Activated CD8-positive, alpha-beta T cell treated with anti-CD3 and anti-CD28 coated beads, Interleukin-2, amount 10 ng/mL, durations not matched to agents 7 days and 5 days (primary cell): ENCODE measurements at regions of chr3 and their contacts with region 1.

Region 1: DNA sequence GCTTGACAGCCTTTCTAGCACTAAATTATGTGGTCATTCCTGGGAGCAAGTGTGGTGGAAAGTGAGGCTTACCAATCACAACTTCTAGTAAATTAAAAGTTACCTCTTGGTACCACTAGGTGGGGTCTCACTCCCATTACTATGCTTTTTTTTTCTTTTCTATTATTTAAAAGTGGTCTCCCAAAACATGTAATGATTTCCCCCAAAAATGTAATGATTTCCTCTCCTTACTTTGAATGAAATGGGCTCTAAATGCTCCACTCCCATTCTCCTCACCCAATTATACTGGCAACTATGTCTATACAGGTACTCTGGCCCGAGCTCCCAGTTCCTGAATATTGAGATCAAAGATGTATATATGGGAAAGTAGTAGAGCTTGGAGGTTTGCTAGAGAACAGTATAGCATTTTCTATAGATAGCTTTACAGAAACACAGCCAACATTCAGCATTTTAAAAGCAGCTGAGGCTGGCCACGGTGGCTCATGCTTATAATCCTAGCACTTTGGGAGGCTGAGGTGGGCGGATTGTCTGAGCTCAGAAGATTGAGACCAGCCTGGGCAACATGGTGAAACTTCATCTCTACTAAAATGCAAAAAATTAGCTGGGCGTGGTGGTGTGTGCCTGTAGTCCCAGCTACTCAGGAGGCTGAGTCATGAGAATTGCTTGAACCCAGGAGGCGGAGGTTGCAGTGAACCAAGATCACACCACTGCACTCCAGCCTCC is 70.9 kb downstream of the DCUN1D1 start:
- DNase-seq: no peak
- ATAC-seq: no peak
- H3K4me3 Mint-ChIP-seq: no peak overlapping the region
- H3K27ac Mint-ChIP-seq: peak overlapping the region; percentile 37
- H3K4me1 Mint-ChIP-seq: peaks cover 50% of the 10 kb centered on the region
- H3K27me3 Mint-ChIP-seq: no peaks in the 10 kb centered on the region

Region 2: GRCh38 chr3:182969277-182969676 is 59.8 kb after region 1 on chr3:
- CTCF ChIA-PET with region 1: interaction called, 16 read pairs
- POLR2A ChIA-PET with region 1: no interaction called
- DNase-seq: no peak
- ATAC-seq: no peak
- H3K4me3 Mint-ChIP-seq: no peak overlapping the region
- H3K27ac Mint-ChIP-seq: peak overlapping the region; percentile 3
- H3K4me1 Mint-ChIP-seq: peaks cover 58% of the 10 kb centered on the region
- H3K27me3 Mint-ChIP-seq: no peaks in the 10 kb centered on the region